Endothelial cell of umbilical vein (primary cell): ENCODE measurements at regions of chr3 and their contacts with region 1.

Region 1: DNA sequence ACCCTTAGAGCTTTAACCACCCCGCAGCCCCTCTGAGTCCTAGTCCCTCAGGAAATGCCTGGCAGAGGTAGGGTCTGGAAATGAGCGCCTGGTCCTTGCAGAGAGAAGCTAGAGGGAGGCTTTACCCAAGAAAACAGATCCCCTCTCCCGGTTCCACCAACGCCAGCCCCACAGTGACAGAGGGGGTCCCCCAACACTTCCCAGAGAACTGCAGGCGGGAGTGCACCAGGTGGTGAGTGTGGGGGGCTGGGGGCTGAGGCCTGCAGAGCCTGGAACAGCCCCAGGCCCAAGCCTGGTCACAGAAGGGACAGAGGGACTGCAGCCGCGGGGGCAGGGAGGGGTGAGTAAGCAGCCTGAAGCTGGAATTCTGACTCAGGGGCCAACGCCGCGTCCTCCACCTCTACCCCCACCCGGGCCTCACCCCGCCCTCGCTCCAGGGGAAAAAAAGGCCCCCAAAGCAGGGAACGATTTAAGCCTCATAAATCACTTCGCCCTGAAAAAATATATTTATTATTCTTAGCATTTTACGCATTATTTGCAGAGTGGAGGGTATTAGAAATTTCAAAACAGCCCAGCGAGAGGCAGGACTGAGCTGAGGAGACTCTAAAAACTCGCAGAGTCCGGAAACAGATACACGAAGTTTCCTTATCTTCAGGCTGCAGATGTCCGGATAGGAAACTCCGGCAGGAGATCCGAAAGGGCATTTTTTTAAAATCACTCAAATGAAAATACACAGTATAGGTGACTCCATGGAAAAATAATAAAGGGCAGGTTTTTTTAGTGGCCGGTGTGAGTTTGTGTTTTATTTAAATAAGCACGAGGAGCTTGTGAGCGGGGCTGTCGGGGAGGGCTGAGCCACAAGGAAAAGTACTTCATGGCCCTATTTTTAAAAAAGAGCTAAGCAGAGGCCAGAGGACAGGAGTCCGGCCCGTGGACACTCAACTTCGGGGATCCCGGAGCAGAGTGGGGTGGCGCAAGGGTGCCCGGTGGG is 10.0 kb downstream of the GATA2 start:
- DNase-seq: peak; percentile 99
- H3K4me3 ChIP-seq: peak overlapping the region in 2 of 3 experiments; percentile 77 to 95
- H3K27ac ChIP-seq: peak overlapping the region; percentile 97
- H3K4me1 ChIP-seq: peaks cover 52% of the 10 kb centered on the region
- H3K27me3 ChIP-seq: no peaks in the 10 kb centered on the region
- CTCF ChIP-seq: peak in 1 of 2 donors; percentile 8
- POLR2A ChIP-seq: peak; percentile 89

Region 2: GRCh38 chr3:128075516-128076482 is 407.2 kb before region 1 on chr3:
- CTCF ChIA-PET with region 1: no interaction called
- POLR2A ChIA-PET with region 1: no interaction called
- dilution Hi-C with region 1: no loop called
- intact Hi-C with region 1: loop called (anchors 5 kb)
- DNase-seq: peak; percentile 94
- H3K4me3 ChIP-seq: peak overlapping the region in 2 of 3 experiments; percentile 16 to 44
- H3K27ac ChIP-seq: peak overlapping the region; percentile 33
- H3K4me1 ChIP-seq: peaks cover 51% of the 10 kb centered on the region
- H3K27me3 ChIP-seq: no peaks in the 10 kb centered on the region
- CTCF ChIP-seq: peak; percentile 95 to 98
- POLR2A ChIP-seq: peak; percentile 55

Region 3: GRCh38 chr3:128170805-128171516 is 312.0 kb before region 1 on chr3:
- CTCF ChIA-PET with region 1: interaction called, 3 read pairs
- POLR2A ChIA-PET with region 1: no interaction called
- dilution Hi-C with region 1: no loop called
- intact Hi-C with region 1: loop called (anchors 5 kb)
- DNase-seq: peak; percentile 78
- H3K4me3 ChIP-seq: no peak overlapping the region
- H3K27ac ChIP-seq: no peak overlapping the region
- H3K4me1 ChIP-seq: no peaks in the 10 kb centered on the region
- H3K27me3 ChIP-seq: no peaks in the 10 kb centered on the region
- CTCF ChIP-seq: peak; percentile 73 to 83
- POLR2A ChIP-seq: no peak

Region 4: GRCh38 chr3:128426128-128426921 is 56.6 kb before region 1 on chr3:
- CTCF ChIA-PET with region 1: interaction called, 48 read pairs
- POLR2A ChIA-PET with region 1: no interaction called
- dilution Hi-C with region 1: no loop called
- intact Hi-C with region 1: loop called (anchors 1 kb)
- DNase-seq: peak; percentile 41
- H3K4me3 ChIP-seq: no peak overlapping the region
- H3K27ac ChIP-seq: no peak overlapping the region
- H3K4me1 ChIP-seq: peaks cover 3% of the 10 kb centered on the region
- H3K27me3 ChIP-seq: peaks cover 0 to under 1% of the 10 kb centered on the region in 2 experiments
- CTCF ChIP-seq: peak; percentile 75 to 96
- POLR2A ChIP-seq: no peak

Region 5: DNA sequence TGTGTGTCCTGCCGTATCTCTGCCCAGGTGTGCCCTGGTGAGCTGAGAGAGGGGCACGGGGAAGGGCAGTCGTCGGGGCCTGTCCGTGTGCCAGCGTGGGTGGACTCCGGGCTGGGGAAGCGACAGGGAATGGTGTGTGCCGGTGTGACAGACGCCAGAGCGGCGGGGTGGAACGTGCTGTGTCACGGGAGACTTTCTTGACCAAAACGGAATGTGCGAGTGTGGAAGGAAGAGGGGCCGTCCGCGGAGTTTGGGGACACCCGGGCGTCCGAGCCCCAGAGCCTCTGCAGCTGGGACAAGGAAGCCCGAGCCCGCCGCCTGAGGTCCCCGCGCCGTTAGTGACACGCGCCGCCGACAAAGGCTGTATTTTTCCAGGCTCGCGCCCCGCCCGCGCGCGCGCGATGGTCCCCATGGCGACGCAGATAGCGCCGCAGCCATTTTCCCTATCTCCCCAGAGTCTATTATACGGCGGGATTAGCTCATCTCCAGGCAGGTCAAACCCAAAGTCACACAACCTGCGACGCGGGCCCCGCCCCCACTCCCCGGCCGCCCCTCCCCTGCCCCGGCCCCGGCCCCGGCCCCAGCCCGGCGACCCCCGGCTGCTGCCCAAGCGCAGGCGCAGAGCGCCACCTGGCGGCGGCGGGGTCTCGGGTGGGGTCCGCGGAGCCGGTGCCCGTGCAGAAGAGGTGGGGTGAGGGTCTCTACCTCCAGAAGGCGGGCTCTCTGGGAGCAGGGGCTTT is 14.6 kb after region 1 on chr3:
- CTCF ChIA-PET with region 1: interaction called, 42 read pairs
- POLR2A ChIA-PET with region 1: interaction called, 3 read pairs
- dilution Hi-C with region 1: no loop called
- intact Hi-C with region 1: loop called (anchors 1 kb)
- DNase-seq: peak; percentile 52
- H3K4me3 ChIP-seq: peak overlapping the region in 2 of 3 experiments; percentile 16 to 33
- H3K27ac ChIP-seq: no peak overlapping the region
- H3K4me1 ChIP-seq: peaks cover 13% of the 10 kb centered on the region
- H3K27me3 ChIP-seq: no peaks in the 10 kb centered on the region
- CTCF ChIP-seq: peak; percentile 65 to 81
- POLR2A ChIP-seq: no peak

Region 6: DNA sequence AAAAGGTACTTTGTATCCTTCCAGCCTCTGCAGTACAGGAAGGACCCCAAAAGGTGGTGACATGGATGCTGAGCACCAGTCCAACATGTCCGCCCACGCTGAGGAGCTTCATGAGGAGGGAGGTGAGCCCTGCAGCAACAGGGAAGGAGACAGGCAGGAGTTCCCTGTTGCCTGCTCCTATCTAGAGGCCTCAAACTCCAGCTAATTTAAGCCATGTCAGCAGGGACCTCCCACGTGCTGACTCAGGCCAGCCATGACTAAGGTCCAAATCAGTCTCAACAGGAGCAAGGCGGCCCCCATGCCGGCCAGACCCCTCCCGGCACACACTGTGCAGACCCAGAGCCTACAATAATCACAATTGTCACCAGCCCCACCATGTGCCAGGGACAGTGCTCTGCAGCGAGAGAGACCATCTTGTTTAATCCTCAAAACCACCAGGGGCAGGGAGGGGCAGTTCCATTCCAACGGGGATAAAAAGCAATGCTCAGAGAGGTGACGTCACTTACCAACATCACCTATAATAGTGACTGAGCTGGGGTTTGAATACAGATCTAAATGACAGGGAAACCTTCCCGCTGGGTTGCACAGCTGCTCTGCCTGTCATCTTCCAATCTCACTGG is 64.5 kb after region 1 on chr3:
- CTCF ChIA-PET with region 1: no interaction called
- POLR2A ChIA-PET with region 1: no interaction called
- dilution Hi-C with region 1: no loop called
- intact Hi-C with region 1: no loop called
- DNase-seq: no peak
- H3K4me3 ChIP-seq: no peak overlapping the region
- H3K27ac ChIP-seq: no peak overlapping the region
- H3K4me1 ChIP-seq: peaks cover 27% of the 10 kb centered on the region
- H3K27me3 ChIP-seq: peaks cover 0 to 2% of the 10 kb centered on the region in 2 experiments
- CTCF ChIP-seq: no peak
- POLR2A ChIP-seq: no peak